ENCODE measurements at regions of chr10 and their contacts with region 1.

Region 1: DNA sequence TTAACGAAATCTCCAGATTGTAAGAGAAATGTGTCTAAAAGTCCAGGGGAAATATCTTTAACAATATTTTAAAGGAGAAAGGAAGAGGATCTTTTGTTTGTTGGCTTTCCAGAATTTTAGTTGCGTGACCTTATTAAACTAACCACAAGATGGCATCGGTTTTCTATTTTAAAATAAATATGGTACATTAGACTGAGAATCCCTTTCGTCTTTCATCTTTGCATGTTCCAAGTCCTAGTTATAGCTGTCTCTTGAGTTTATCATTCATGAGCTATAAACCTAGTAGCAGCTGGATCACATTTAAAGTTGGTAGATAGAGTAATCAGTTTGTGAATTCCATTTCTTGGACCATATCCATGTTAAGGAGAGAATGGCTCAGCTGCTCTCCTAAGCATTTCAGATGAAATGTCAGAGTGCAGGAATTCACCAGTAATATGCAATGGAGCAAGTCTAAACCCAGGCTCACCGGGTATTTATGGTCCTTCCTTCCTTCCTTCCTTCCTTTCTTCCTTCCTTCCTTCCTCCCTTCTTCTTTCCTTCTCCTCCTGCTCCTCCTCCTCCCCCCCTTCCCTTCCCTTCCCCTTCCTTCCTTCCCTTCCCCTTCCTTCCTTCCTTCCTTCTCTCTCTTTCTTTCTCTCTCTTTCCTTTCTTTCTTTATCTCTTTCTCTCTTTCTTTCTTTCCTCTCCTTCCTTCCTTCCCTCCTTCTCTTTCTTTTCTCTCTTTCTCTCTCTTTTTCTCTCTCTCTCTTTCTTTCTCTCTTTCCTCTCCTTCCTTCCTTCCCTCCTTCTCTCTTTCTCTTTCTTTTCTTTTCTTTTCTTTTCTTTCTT is 57.8 kb upstream of the RAB18 start:
- DNase-seq: peak in 2 of 9 experiments; percentile 38 to 60
- ATAC-seq: peak; percentile 46
- H3K4me3 ChIP-seq: no peak overlapping the region
- H3K4me3 Mint-ChIP-seq: no peak overlapping the region
- H3K27ac ChIP-seq: no peak overlapping the region
- H3K27ac Mint-ChIP-seq: no peak overlapping the region
- H3K4me1 ChIP-seq: peaks cover 9% of the 10 kb centered on the region
- H3K4me1 Mint-ChIP-seq: peaks cover 21% of the 10 kb centered on the region
- H3K27me3 ChIP-seq: no peaks in the 10 kb centered on the region
- H3K27me3 Mint-ChIP-seq: no peaks in the 10 kb centered on the region
- CTCF ChIP-seq: peak; percentile 61

Region 2: DNA sequence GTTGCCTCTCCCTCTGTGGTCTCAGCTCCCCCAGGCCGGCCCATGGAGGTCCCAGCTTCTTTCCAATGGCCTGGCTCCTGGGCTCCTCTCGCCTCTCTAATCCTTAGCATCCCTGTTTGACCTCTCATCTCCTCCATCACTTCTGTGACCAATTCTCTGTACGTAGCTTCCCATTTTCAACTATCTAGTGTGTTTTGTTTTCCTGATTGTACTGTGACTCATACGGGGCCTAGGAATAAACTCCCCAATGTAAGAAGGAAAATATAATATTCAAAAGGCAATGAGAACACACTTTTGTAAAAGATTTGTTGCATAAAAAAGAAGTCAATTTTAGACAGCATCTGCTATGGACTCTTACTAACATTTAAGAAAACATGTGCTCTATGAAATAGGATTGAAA is 209.0 kb after region 1 on chr10:
- CTCF ChIA-PET with region 1: interaction called, 18 read pairs
- POLR2A ChIA-PET with region 1: no interaction called
- intact Hi-C with region 1: loop called (anchors 1 kb)
- DNase-seq: no peak
- ATAC-seq: no peak
- H3K4me3 ChIP-seq: no peak overlapping the region
- H3K4me3 Mint-ChIP-seq: no peak overlapping the region
- H3K27ac ChIP-seq: no peak overlapping the region
- H3K27ac Mint-ChIP-seq: no peak overlapping the region
- H3K4me1 ChIP-seq: no peaks in the 10 kb centered on the region
- H3K4me1 Mint-ChIP-seq: no peaks in the 10 kb centered on the region
- H3K27me3 ChIP-seq: no peaks in the 10 kb centered on the region
- H3K27me3 Mint-ChIP-seq: peaks cover 10% of the 10 kb centered on the region
- CTCF ChIP-seq: no peak

Region 3: GRCh38 chr10:27724287-27724686 is 278.0 kb after region 1 on chr10:
- CTCF ChIA-PET with region 1: interaction called, 3 read pairs
- POLR2A ChIA-PET with region 1: no interaction called
- intact Hi-C with region 1: loop called in 1 of 2 experiments (anchors 5 kb)
- DNase-seq: no peak
- ATAC-seq: no peak
- H3K4me3 ChIP-seq: no peak overlapping the region
- H3K4me3 Mint-ChIP-seq: no peak overlapping the region
- H3K27ac ChIP-seq: no peak overlapping the region
- H3K27ac Mint-ChIP-seq: no peak overlapping the region
- H3K4me1 ChIP-seq: no peaks in the 10 kb centered on the region
- H3K4me1 Mint-ChIP-seq: no peaks in the 10 kb centered on the region
- H3K27me3 ChIP-seq: no peaks in the 10 kb centered on the region
- H3K27me3 Mint-ChIP-seq: peaks cover 21% of the 10 kb centered on the region
- CTCF ChIP-seq: no peak

Region 4: GRCh38 chr10:28179006-28179742 is 732.9 kb after region 1 on chr10:
- CTCF ChIA-PET with region 1: no interaction called
- POLR2A ChIA-PET with region 1: no interaction called
- intact Hi-C with region 1: loop called (anchors 2 to 5 kb)
- DNase-seq: peak in 3 of 9 experiments; percentile 32 to 77 (median 68)
- ATAC-seq: peak; percentile 54
- H3K4me3 ChIP-seq: peak overlapping the region; percentile 22 to 45
- H3K4me3 Mint-ChIP-seq: peak overlapping the region; percentile 91
- H3K27ac ChIP-seq: peak overlapping the region in 1 of 2 experiments; percentile 69
- H3K27ac Mint-ChIP-seq: peak overlapping the region; percentile 95
- H3K4me1 ChIP-seq: peaks cover 16% of the 10 kb centered on the region
- H3K4me1 Mint-ChIP-seq: peaks cover 44% of the 10 kb centered on the region
- H3K27me3 ChIP-seq: no peaks in the 10 kb centered on the region
- H3K27me3 Mint-ChIP-seq: no peaks in the 10 kb centered on the region
- CTCF ChIP-seq: peak; percentile 93